ENCODE measurements at regions of chr2 and their contacts with region 1.

Region 1: GRCh38 chr2:218257390-218257981 is 3.3 kb upstream of the GPBAR1 start:
- DNase-seq: peak; percentile 89
- H3K4me3 Mint-ChIP-seq: peak overlapping the region; percentile 21
- H3K27ac Mint-ChIP-seq: peak overlapping the region; percentile 90
- H3K4me1 Mint-ChIP-seq: peaks cover 23% of the 10 kb centered on the region
- H3K27me3 Mint-ChIP-seq: no peaks in the 10 kb centered on the region

Region 2: GRCh38 chr2:218186355-218186766 is 71.1 kb before region 1 on chr2:
- intact Hi-C with region 1: loop called (anchors 1 kb)
- DNase-seq: peak; percentile 90
- H3K4me3 Mint-ChIP-seq: no peak overlapping the region
- H3K27ac Mint-ChIP-seq: no peak overlapping the region
- H3K4me1 Mint-ChIP-seq: peaks cover 8% of the 10 kb centered on the region
- H3K27me3 Mint-ChIP-seq: peaks cover 13% of the 10 kb centered on the region

Region 3: DNA sequence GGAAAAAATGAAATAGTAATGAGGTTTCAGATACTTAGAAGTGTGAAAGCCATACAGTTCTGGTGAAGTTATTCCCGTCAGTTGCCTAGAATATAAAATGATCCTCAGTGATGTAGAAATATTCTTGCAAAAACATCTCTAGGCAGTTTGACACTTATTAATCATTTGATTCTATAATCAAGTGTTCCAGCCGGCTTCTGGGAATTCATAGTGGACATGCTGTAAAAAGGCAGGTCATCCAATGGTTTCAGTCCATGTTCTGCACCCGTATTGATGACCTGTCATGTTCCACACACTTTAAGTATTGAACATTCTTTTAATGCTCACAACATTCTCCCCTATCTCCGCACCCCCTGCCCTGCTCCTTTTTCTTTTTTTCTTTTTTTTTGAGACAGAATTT is 20.7 kb before region 1 on chr2:
- intact Hi-C with region 1: loop called (anchors 2 kb)
- DNase-seq: no peak
- H3K4me3 Mint-ChIP-seq: no peak overlapping the region
- H3K27ac Mint-ChIP-seq: no peak overlapping the region
- H3K4me1 Mint-ChIP-seq: peaks cover 9% of the 10 kb centered on the region
- H3K27me3 Mint-ChIP-seq: no peaks in the 10 kb centered on the region

Region 4: DNA sequence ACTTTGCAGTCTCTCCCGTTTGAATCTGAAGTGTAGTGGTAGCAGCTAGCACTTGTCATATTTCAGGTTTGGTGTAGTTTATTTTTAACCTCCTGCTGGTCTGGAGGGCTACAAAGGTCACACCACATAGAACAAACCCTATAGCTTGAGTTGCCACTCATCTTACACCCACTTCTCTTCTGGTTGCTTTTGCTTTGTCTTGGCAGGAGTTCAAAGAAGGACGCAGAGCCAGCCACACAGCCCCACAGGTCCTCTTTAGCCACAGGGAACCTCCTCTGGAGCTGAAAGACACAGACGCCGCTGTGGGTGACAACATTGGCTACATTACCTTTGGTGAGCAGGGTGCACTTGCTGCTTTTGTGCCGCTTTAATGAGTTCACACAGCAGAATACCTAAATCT is 12.3 kb before region 1 on chr2:
- intact Hi-C with region 1: loop called (anchors 2 kb)
- DNase-seq: no peak
- H3K4me3 Mint-ChIP-seq: no peak overlapping the region
- H3K27ac Mint-ChIP-seq: peak overlapping the region; percentile 70
- H3K4me1 Mint-ChIP-seq: peaks cover 19% of the 10 kb centered on the region
- H3K27me3 Mint-ChIP-seq: no peaks in the 10 kb centered on the region